HEK293 (cell line): ENCODE measurements at regions of chr9 and their contacts with region 1.

Region 1: DNA sequence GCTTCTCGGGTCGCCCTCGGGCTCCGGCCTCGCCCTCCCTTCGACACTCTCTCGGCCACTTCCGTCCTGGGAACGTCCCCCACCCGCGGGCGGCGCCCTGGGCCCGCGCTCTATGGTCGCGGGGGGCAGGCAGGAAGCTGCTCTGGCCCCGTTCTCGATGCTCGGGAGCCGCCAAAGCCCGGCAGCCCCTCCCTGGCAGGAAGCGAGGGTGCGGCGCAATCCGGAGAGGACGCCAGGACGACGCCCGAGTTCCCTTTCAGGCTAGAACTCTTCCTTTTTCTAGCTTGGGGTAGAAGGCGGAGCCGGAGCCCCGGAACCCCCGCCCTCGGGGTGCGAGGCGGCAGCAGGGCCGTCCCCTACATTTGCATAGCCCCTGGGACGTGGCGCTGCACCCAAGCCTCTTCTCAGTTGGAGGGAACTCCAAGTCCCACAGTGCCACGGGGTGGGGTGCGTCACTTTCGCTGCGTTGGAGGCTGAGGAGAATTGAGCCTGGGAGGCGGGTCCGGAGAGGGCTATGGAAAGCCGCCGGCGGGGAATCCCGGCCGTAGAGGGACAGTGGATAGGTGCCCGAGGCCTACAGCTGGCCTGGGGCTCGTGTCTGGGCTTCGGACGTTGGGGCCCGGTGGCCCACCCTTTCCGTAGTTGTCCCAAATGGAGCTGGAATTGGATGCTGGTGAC is at the starts of genes CREB3 and TLN1:
- H3K4me3 ChIP-seq: peak within 1 kb of the TSS; percentile 81
- H3K27ac ChIP-seq: peak within 1 kb of the TSS; percentile 81
- H3K4me1 ChIP-seq: peaks cover 13% of the 10 kb centered on the region
- CTCF ChIP-seq: peak; percentile 81

Region 2: DNA sequence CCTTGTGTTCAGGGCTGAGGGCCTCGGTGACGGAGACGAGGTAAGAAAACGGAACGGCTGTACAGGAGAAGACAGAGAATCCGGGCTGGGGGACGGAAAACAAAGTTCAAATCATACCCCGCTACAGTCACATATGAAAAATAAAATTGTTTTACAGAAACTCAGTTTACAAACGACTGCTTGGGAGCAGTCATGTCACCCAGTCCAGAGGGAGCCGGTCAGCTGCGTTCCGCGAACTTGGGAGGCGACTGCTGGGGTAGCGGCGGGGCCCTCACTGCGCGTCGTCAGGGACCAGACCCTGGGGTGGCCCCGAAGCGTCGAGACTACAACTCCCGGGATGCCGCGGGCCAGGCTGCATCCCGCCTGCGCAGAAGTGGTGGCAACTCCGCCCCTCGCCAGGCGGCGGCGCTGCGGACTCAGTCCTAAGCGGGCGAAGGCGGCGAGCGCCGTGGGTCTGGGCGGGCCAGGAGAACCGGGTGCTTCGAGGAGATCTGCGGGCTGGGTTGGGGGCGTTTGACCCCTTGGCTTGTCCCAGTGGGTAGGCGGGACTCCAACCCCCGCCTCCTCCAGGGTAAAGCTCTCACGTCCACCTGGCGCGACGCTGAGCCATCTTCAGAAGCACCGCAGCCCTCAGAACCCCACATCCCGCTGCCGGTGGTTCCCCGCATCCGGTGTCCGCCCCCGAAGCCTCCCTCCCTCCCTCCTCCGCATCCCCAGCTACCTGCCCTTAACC is 85.6 kb before region 1 on chr9:
- CTCF ChIA-PET with region 1: interaction called, 17 read pairs
- POLR2A ChIA-PET with region 1: interaction called, 21 read pairs
- H3K4me3 ChIP-seq: peak overlapping the region; percentile 62
- H3K27ac ChIP-seq: peak overlapping the region; percentile 51
- H3K4me1 ChIP-seq: no peaks in the 10 kb centered on the region
- CTCF ChIP-seq: peak; percentile 94

Region 3: GRCh38 chr9:35664531-35665470 is 67.5 kb before region 1 on chr9 and contains the start of gene ARHGEF39:
- CTCF ChIA-PET with region 1: interaction called, 21 read pairs
- POLR2A ChIA-PET with region 1: interaction called, 25 read pairs
- H3K4me3 ChIP-seq: peak within 1 kb of the TSS; percentile 75
- H3K27ac ChIP-seq: peak within 1 kb of the TSS; percentile 64; the same call in 1 of the 2 replicates
- H3K4me1 ChIP-seq: no peaks in the 10 kb centered on the region
- CTCF ChIP-seq: peak; percentile 62; the same call in 1 of the 2 replicates

Region 4: DNA sequence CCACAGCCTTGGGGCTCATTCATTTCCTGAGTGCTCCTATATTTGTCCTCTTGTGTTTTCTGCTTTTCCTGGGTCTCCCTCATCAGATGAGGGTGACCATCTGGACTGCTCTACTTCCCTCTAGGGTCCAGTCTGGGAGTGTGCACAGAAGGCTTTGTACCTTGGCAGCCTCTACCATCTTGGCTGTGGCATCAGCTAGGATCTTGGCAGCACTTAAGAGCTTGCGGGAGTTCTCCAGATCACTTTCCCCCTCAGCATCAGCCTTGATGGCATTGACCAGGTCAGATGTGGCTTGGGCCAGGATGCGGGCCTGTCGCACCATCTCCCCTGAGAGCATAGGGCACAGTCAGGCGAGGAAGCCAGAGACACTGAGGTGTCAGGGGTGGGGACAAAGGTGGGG is 16.0 kb before region 1 on chr9:
- CTCF ChIA-PET with region 1: interaction called, 6 read pairs
- POLR2A ChIA-PET with region 1: interaction called, 21 read pairs
- H3K4me3 ChIP-seq: no peak overlapping the region
- H3K27ac ChIP-seq: no peak overlapping the region
- H3K4me1 ChIP-seq: no peaks in the 10 kb centered on the region
- CTCF ChIP-seq: no peak

Region 5: DNA sequence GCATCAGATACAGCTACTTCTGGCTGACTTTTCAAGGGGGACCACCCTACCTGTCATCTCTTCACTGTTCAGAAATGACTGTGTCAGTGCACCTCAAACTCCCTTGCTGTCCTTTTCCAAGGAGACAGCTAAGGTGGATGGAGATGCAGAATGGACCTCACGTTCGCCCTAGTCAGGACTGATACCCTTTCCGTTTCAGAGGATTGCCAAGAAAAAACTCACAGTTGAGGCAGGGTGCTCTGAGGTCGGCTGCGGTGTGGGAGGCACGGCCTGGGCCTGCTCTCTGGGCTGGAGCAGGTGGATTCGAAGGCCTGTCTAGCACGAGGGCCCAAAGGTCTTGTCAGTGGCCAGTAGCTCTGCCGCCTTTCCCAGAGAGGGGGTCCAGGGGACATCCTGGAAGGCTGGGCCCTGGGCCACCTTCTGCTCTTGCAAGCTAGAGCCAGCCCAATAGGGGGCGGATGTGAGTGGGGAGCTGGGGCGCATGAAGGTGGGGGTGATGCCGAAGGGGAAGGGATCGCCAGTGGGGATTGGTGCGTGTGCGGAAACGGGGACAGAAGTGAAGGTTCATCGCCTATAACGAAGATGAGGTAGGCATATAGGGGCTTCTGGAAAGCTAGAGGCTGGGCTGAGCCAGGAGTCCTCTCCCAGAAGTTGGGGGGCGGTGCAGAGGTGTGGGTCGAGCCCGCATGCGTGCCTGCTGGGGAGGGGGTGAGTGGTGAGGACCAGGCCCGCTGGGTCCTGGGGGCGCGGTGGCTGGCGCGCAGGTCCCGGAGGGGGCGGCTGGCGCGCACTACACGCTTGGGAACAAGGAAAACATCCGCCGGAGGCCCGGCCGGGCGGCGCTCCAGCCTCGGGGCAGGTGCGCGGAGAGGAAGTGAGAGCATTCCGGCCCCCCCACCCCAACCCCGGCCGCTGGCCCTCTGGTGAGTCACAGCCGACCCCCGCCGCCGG is 24.3 kb after region 1 on chr9:
- CTCF ChIA-PET with region 1: interaction called, 20 read pairs
- POLR2A ChIA-PET with region 1: interaction called, 12 read pairs
- H3K4me3 ChIP-seq: peak overlapping the region; percentile 71
- H3K27ac ChIP-seq: peak overlapping the region; percentile 94
- H3K4me1 ChIP-seq: peaks cover 10% of the 10 kb centered on the region
- CTCF ChIP-seq: peak; percentile 89